GM12878 (cell line): ENCODE measurements at regions of chr2 and their contacts with region 1.

Region 1: DNA sequence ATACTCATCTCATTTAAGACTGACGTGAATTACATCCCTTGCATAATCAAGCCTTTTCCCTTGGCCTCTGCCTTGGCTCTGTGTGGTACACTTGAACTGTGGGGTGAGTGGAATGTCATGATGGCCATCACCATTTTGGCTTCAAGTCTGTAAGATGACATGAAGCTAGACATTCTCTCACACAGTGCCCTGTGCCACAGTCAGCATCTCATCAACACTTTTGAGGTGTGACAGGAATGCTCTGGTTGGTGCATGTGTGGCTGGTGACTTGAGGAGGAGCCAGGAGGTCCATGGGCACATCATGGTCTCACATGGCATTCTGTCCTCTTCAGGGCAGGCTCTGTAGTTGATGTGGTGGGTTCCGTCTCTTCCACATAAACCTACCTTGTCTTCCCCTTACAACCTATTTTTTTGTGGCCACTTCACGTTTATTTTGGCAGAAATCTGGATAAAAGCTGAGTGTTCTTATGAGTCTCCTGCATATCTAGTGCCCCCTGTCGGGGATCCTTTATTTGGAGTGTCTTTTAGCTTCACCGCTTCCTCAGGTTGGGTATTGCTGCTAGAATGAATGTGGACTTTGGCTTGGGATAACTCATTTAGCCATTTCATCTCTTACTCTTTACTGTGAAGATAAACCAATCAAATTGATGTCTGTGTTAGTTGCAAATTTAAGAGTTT is 28.1 kb downstream of the MAP4K4 start:
- DNase-seq: no peak
- ATAC-seq: 0 out of 3 replicates have a peak, but pooled peaks have one; percentile 15
- H3K4me3 ChIP-seq: no peak overlapping the region
- H3K27ac ChIP-seq: no peak overlapping the region
- H3K4me1 ChIP-seq: no peaks in the 10 kb centered on the region
- H3K27me3 ChIP-seq: no peaks in the 10 kb centered on the region; a peak in 1 of 4 replicates
- CTCF ChIP-seq: peak; percentile 21 to 46 (median 28); a peak in 5 of 6 replicates
- EP300 ChIP-seq: no peak
- POLR2A ChIP-seq: no peak
- RAD21 ChIP-seq: peak; percentile 58

Region 2: DNA sequence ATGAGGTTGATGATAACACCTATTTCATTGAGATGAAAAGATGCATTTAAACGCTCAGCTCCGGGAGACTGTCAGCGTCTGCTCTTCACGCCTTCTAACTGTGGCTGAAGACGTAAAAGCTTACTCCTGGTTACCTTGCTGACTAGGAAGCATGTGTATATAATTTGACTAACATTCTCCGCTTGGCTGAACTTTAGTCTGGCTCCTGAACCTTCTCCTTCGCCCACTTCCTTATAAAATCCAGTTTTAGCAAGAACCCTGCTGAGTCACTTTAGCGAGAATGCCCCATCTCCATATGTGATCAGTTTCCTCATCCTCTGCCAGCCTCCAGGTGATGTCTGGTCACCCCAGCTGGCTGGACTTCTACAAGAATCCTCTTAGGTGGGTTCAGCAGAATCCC is 325.6 kb before region 1 on chr2:
- CTCF ChIA-PET with region 1: no interaction called
- POLR2A ChIA-PET with region 1: no interaction called
- RAD21 ChIA-PET with region 1: no interaction called
- SMC1A ChIA-PET with region 1: no interaction called
- in situ Hi-C with region 1: no loop called
- intact Hi-C with region 1: no loop called
- DNase-seq: no peak
- ATAC-seq: no peak
- H3K4me3 ChIP-seq: no peak overlapping the region
- H3K27ac ChIP-seq: no peak overlapping the region
- H3K4me1 ChIP-seq: no peaks in the 10 kb centered on the region
- H3K27me3 ChIP-seq: peaks cover 0 to 14% of the 10 kb centered on the region in 2 experiments; a peak in 2 of 4 replicates
- CTCF ChIP-seq: no peak
- EP300 ChIP-seq: no peak
- POLR2A ChIP-seq: no peak
- RAD21 ChIP-seq: no peak

Region 3: DNA sequence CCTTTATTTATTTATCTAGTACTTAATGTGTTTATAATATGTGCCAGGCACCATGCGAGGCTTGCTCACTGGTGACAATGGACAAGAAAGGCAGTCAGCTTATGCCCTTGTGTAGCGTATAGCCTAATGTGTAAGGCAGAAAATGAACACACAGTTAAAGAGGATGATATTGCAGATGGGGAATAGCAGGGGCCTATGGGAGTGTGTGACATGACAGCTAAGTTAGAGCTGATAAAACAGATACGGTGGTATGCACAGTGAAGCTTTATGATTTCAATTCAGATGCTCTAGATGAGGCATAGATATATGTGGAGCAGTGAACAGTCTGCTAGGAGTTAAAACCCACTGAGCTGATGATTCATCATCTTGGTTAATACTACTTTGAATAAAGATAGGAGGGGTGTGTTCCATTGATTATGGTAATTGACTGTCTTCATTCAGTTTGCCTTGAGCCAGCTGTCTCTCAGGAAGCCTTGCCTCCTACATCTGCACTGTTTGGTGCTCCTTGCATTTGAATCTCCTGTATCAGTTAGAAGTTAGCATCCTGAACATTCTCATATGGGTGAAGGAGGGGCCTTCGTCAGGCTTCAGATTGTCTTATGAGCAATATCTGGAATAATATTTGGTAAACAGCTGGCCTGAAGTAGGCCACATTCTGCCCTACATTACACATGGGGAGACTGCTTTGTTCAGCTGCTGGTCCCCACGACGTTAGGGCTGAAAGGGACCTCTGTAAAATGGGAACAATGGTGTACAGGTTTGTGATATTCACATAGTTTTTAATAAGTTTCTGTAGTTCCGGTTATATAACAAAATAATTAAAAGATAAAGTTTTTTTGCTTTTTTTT is 15.0 kb before region 1 on chr2:
- CTCF ChIA-PET with region 1: interaction called, 19 read pairs
- POLR2A ChIA-PET with region 1: interaction called, 5 read pairs
- RAD21 ChIA-PET with region 1: interaction called, 3 read pairs
- SMC1A ChIA-PET with region 1: interaction called, 14 read pairs
- in situ Hi-C with region 1: no loop called
- intact Hi-C with region 1: no loop called
- DNase-seq: no peak
- ATAC-seq: peak; percentile 77
- H3K4me3 ChIP-seq: no peak overlapping the region
- H3K27ac ChIP-seq: no peak overlapping the region
- H3K4me1 ChIP-seq: peaks cover 11% of the 10 kb centered on the region
- H3K27me3 ChIP-seq: no peaks in the 10 kb centered on the region
- CTCF ChIP-seq: no peak
- EP300 ChIP-seq: no peak
- POLR2A ChIP-seq: no peak
- RAD21 ChIP-seq: no peak